CD4-positive, alpha-beta T cell (primary cell): ENCODE measurements at regions of chr16 and their contacts with region 1.

Region 1: GRCh38 chr16:81035398-81035974 is at the start of gene ATMIN:
- DNase-seq: peak; percentile 78 to 96 (median 88)
- ATAC-seq: peak; percentile 94
- H3K4me3 ChIP-seq: peak within 1 kb of the TSS; percentile 57
- H3K4me3 Mint-ChIP-seq: peak within 1 kb of the TSS; percentile 90
- H3K27ac ChIP-seq: no peak within 1 kb of the TSS
- H3K27ac Mint-ChIP-seq: peak within 1 kb of the TSS; percentile 73
- H3K4me1 ChIP-seq: peaks cover 30% of the 10 kb centered on the region
- H3K4me1 Mint-ChIP-seq: peaks cover 40% of the 10 kb centered on the region
- H3K27me3 ChIP-seq: no peaks in the 10 kb centered on the region
- H3K27me3 Mint-ChIP-seq: no peaks in the 10 kb centered on the region
- CTCF ChIP-seq: peak; percentile 84
- total RNA-seq, gene ATMIN: 29.9 to 31.7 TPM

Region 2: GRCh38 chr16:81012974-81013373 is 22.5 kb before region 1 on chr16:
- CTCF ChIA-PET with region 1: interaction called, 80 read pairs
- POLR2A ChIA-PET with region 1: interaction called, 4 read pairs
- intact Hi-C with region 1: loop called in 1 of 2 experiments (anchors 1 kb)
- DNase-seq: no peak
- ATAC-seq: no peak
- H3K4me3 ChIP-seq: no peak overlapping the region
- H3K4me3 Mint-ChIP-seq: no peak overlapping the region
- H3K27ac ChIP-seq: no peak overlapping the region
- H3K27ac Mint-ChIP-seq: no peak overlapping the region
- H3K4me1 ChIP-seq: peaks cover 5% of the 10 kb centered on the region
- H3K4me1 Mint-ChIP-seq: no peaks in the 10 kb centered on the region
- H3K27me3 ChIP-seq: no peaks in the 10 kb centered on the region
- H3K27me3 Mint-ChIP-seq: no peaks in the 10 kb centered on the region
- CTCF ChIP-seq: no peak

Region 3: DNA sequence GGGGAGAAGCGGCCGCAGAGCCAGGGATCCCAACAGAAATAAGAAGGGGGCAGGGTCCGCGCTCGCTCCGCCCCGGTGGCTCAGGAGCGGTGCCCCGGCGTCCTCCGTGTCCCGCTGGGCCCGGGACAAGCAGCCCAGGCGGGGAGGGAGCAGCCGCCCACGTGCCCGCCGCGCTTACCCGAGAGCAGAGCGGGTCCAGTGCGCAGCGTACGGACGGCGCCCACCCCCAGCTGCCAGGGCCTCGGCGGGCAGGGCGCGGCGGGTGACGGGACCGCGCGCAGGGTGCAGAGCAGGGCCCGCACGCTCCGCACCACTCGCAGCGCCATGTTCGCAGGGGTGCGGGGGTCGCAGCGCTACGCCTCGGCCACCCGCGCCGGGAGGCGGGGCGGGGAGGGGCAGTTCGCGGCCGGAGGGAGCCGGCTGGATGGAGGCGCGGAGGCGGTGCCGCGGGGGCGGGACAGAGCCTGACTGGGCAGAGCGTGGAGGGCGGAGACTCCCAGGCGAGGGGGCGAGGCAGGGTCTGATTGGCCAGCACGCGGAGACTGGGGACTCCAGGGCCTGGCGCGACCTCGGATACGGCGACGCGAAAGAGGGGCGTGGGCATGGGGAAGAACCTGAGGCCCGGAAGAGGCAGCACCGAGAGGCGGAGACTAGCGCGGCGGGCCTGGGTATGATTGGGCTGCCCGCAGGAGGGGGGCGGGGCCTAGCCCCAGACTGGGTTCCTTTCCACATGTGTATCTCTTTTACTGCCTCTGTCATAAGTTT is 60.6 kb after region 1 on chr16 and contains the start of gene GCSH:
- CTCF ChIA-PET with region 1: interaction called, 4 read pairs
- POLR2A ChIA-PET with region 1: no interaction called
- intact Hi-C with region 1: loop called (anchors 2 to 5 kb)
- DNase-seq: peak; percentile 95 to 100 (median 98)
- ATAC-seq: peak; percentile 96
- H3K4me3 ChIP-seq: peak within 1 kb of the TSS; percentile 74
- H3K4me3 Mint-ChIP-seq: peak within 1 kb of the TSS; percentile 96
- H3K27ac ChIP-seq: peak within 1 kb of the TSS in 1 of 2 donors; percentile 16
- H3K27ac Mint-ChIP-seq: peak within 1 kb of the TSS; percentile 77
- H3K4me1 ChIP-seq: peaks cover 17% of the 10 kb centered on the region
- H3K4me1 Mint-ChIP-seq: peaks cover 17% of the 10 kb centered on the region
- H3K27me3 ChIP-seq: no peaks in the 10 kb centered on the region
- H3K27me3 Mint-ChIP-seq: no peaks in the 10 kb centered on the region
- CTCF ChIP-seq: no peak
- total RNA-seq, gene GCSH: 2.3 to 3.2 TPM

Region 4: GRCh38 chr16:81314603-81315270 is 279.3 kb after region 1 on chr16 and contains the start of gene GAN:
- CTCF ChIA-PET with region 1: no interaction called
- POLR2A ChIA-PET with region 1: interaction called, 6 read pairs
- intact Hi-C with region 1: loop called in 1 of 2 experiments (anchors 10 kb)
- DNase-seq: peak; percentile 85 to 97 (median 91)
- ATAC-seq: peak; percentile 96
- H3K4me3 ChIP-seq: peak within 1 kb of the TSS; percentile 78
- H3K4me3 Mint-ChIP-seq: peak within 1 kb of the TSS; percentile 95
- H3K27ac ChIP-seq: peak within 1 kb of the TSS in 1 of 2 donors; percentile 41
- H3K27ac Mint-ChIP-seq: peak within 1 kb of the TSS; percentile 89
- H3K4me1 ChIP-seq: peaks cover 27% of the 10 kb centered on the region
- H3K4me1 Mint-ChIP-seq: peaks cover 62% of the 10 kb centered on the region
- H3K27me3 ChIP-seq: no peaks in the 10 kb centered on the region
- H3K27me3 Mint-ChIP-seq: no peaks in the 10 kb centered on the region
- CTCF ChIP-seq: no peak
- total RNA-seq, gene GAN: 4.5 to 4.7 TPM